ENCODE measurements at regions of chr14 and their contacts with region 1.

Region 1: GRCh38 chr14:92135267-92135666 is 13.5 kb downstream of the CPSF2 start:
- DNase-seq: no peak
- ATAC-seq: 0 out of 3 replicates have a peak, but pooled peaks have one; percentile 35
- H3K4me3 ChIP-seq: no peak overlapping the region
- H3K27ac ChIP-seq: no peak overlapping the region
- H3K4me1 ChIP-seq: no peaks in the 10 kb centered on the region
- H3K27me3 ChIP-seq: no peaks in the 10 kb centered on the region
- CTCF ChIP-seq: peak; percentile 30 to 59 (median 36); a peak in 3 of 6 replicates
- EP300 ChIP-seq: no peak
- POLR2A ChIP-seq: no peak
- RAD21 ChIP-seq: peak; percentile 54

Region 2: DNA sequence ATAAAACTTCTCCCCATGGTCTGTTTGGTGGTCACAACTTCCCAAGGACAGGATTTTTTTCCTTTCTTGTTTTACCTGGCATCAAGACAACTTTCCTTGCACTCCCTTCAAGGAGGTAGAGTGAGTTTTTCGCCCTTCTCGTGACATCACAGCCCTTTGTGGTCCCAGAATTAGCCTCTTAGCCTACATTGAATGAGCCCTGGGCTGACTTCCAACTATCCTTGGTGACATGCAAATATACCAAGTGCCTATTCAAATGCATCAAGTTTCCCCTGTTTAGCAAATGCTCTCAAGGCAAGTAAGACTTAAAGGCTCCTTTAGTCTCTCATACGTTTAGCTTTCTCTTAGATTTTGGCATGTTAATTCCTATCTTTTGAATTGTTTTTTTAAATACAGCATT is 304.5 kb before region 1 on chr14:
- CTCF ChIA-PET with region 1: no interaction called
- POLR2A ChIA-PET with region 1: no interaction called
- RAD21 ChIA-PET with region 1: no interaction called
- SMC1A ChIA-PET with region 1: no interaction called
- in situ Hi-C with region 1: no loop called
- intact Hi-C with region 1: no loop called
- DNase-seq: peak; percentile 62
- ATAC-seq: peak; percentile 94
- H3K4me3 ChIP-seq: no peak overlapping the region
- H3K27ac ChIP-seq: no peak overlapping the region
- H3K4me1 ChIP-seq: no peaks in the 10 kb centered on the region
- H3K27me3 ChIP-seq: peaks cover 0 to 3% of the 10 kb centered on the region in 2 experiments; a peak in 3 of 4 replicates
- CTCF ChIP-seq: no peak
- EP300 ChIP-seq: no peak
- POLR2A ChIP-seq: no peak
- RAD21 ChIP-seq: no peak

Region 3: GRCh38 chr14:91893007-91893406 is 242.3 kb before region 1 on chr14:
- CTCF ChIA-PET with region 1: no interaction called
- POLR2A ChIA-PET with region 1: interaction called, 10 read pairs
- RAD21 ChIA-PET with region 1: no interaction called
- SMC1A ChIA-PET with region 1: no interaction called
- in situ Hi-C with region 1: no loop called
- intact Hi-C with region 1: no loop called
- DNase-seq: no peak
- ATAC-seq: peak; percentile 87
- H3K4me3 ChIP-seq: no peak overlapping the region
- H3K27ac ChIP-seq: no peak overlapping the region
- H3K4me1 ChIP-seq: no peaks in the 10 kb centered on the region
- H3K27me3 ChIP-seq: peaks cover 0 to 1% of the 10 kb centered on the region in 2 experiments; a peak in 1 of 4 replicates
- CTCF ChIP-seq: peak; percentile 52 to 67 (median 67)
- EP300 ChIP-seq: no peak
- POLR2A ChIP-seq: no peak
- RAD21 ChIP-seq: peak; percentile 41

Region 4: GRCh38 chr14:92323011-92323915 is 188.0 kb after region 1 on chr14 and contains the start of gene SLC24A4:
- CTCF ChIA-PET with region 1: interaction called, 3 read pairs
- POLR2A ChIA-PET with region 1: no interaction called
- RAD21 ChIA-PET with region 1: interaction called, 3 read pairs
- SMC1A ChIA-PET with region 1: no interaction called
- in situ Hi-C with region 1: no loop called
- intact Hi-C with region 1: loop called (anchors 10 kb)
- DNase-seq: no peak
- ATAC-seq: peak; percentile 82
- H3K4me3 ChIP-seq: peak within 1 kb of the TSS; percentile 11; the same call in 1 of the 2 replicates
- H3K27ac ChIP-seq: no peak within 1 kb of the TSS
- H3K4me1 ChIP-seq: no peaks in the 10 kb centered on the region
- H3K27me3 ChIP-seq: peaks cover 9 to 21% of the 10 kb centered on the region in 2 experiments
- CTCF ChIP-seq: peak in 1 of 3 experiments; percentile 20; a peak in 1 of 6 replicates
- EP300 ChIP-seq: no peak
- POLR2A ChIP-seq: no peak
- RAD21 ChIP-seq: no peak
- polyA plus RNA-seq, gene SLC24A4: not detected

Region 5: GRCh38 chr14:92456215-92457015 is 321.1 kb after region 1 on chr14:
- CTCF ChIA-PET with region 1: interaction called, 6 read pairs
- POLR2A ChIA-PET with region 1: no interaction called
- RAD21 ChIA-PET with region 1: interaction called, 9 read pairs
- SMC1A ChIA-PET with region 1: interaction called, 5 read pairs
- in situ Hi-C with region 1: no loop called
- intact Hi-C with region 1: loop called (anchors 5 kb)
- DNase-seq: no peak
- ATAC-seq: peak; percentile 84
- H3K4me3 ChIP-seq: no peak overlapping the region
- H3K27ac ChIP-seq: no peak overlapping the region
- H3K4me1 ChIP-seq: peaks cover 9% of the 10 kb centered on the region
- H3K27me3 ChIP-seq: no peaks in the 10 kb centered on the region
- CTCF ChIP-seq: peak; percentile 75 to 89 (median 76)
- EP300 ChIP-seq: no peak
- POLR2A ChIP-seq: no peak
- RAD21 ChIP-seq: peak; percentile 75

Region 6: DNA sequence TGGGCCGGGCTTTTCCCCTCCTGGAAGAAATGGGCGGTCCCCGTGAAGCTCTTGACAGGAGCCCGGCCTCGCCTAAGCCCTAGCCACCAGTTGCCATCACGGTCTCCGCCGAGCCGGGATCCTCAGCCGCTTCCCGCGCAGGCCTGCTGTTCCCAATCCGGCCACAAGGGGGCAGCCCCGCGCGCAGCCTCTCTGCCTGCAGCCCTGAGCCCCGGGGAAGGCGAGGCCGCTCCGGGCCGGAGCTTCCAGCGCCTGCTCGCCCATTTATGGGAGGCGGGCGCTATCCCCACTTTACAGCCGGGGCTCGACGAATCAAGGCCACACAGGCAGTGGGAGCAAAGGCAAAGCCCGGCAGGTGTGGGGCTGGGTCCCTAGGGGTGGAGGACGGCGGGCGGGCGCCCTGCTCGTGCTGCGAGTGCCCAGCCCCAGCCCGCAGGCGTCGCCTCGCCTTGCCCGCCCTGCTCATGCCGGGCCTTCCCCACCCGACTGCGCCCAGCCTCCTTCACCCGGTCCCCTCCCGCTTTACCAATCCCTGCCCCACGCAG is 551.7 kb after region 1 on chr14:
- CTCF ChIA-PET with region 1: interaction called, 11 read pairs
- POLR2A ChIA-PET with region 1: no interaction called
- RAD21 ChIA-PET with region 1: no interaction called
- SMC1A ChIA-PET with region 1: interaction called, 4 read pairs
- in situ Hi-C with region 1: loop called (anchors 25 kb)
- intact Hi-C with region 1: loop called (anchors 5 kb)
- DNase-seq: no peak
- ATAC-seq: peak; percentile 82
- H3K4me3 ChIP-seq: no peak overlapping the region
- H3K27ac ChIP-seq: no peak overlapping the region
- H3K4me1 ChIP-seq: no peaks in the 10 kb centered on the region
- H3K27me3 ChIP-seq: no peaks in the 10 kb centered on the region
- CTCF ChIP-seq: peak; percentile 78 to 89 (median 84)
- EP300 ChIP-seq: no peak
- POLR2A ChIP-seq: no peak
- RAD21 ChIP-seq: peak; percentile 64

Measured in GM12878 (cell line).